MCF 10A (cell line): ENCODE measurements at regions of chr15 and their contacts with region 1.

Region 1: GRCh38 chr15:72375847-72376581 is at the start of gene HEXA:
- DNase-seq: peak; percentile 93
- H3K4me3 Mint-ChIP-seq: peak within 1 kb of the TSS; percentile 92
- H3K27ac Mint-ChIP-seq: peak within 1 kb of the TSS; percentile 95
- H3K4me1 Mint-ChIP-seq: peaks cover 18% of the 10 kb centered on the region
- H3K27me3 Mint-ChIP-seq: no peaks in the 10 kb centered on the region
- CTCF ChIP-seq: no peak
- total RNA-seq, gene HEXA: 87.5 and 110 TPM in 2 replicates

Region 2: DNA sequence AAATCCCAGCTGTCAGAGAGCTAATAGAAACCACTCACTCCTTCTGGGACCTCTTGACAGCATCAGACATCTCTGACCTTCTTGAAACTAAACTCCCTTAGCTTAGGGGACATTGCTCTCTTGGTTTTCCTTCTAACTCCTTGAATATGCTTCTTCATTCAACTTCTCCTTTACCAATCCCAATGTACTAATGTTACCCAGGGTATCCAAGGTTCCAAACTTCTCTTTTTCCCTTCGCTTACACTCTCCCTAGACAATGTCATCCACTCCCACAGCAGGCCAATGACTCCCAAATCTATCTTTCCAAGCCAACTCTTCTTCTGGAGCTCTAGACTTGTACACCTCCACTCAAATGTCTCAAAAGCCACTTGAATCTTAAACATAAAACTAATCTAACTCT is 14.8 kb before region 1 on chr15:
- CTCF ChIA-PET with region 1: no interaction called
- POLR2A ChIA-PET with region 1: interaction called, 21 read pairs
- intact Hi-C with region 1: no loop called
- DNase-seq: no peak
- H3K4me3 Mint-ChIP-seq: no peak overlapping the region
- H3K27ac Mint-ChIP-seq: no peak overlapping the region
- H3K4me1 Mint-ChIP-seq: peaks cover 11% of the 10 kb centered on the region
- H3K27me3 Mint-ChIP-seq: no peaks in the 10 kb centered on the region
- CTCF ChIP-seq: no peak

Region 3: GRCh38 chr15:72404841-72405240 is 28.8 kb after region 1 on chr15:
- CTCF ChIA-PET with region 1: no interaction called
- POLR2A ChIA-PET with region 1: interaction called, 13 read pairs
- intact Hi-C with region 1: no loop called
- DNase-seq: no peak
- H3K4me3 Mint-ChIP-seq: no peak overlapping the region
- H3K27ac Mint-ChIP-seq: no peak overlapping the region
- H3K4me1 Mint-ChIP-seq: peaks cover 6% of the 10 kb centered on the region
- H3K27me3 Mint-ChIP-seq: peaks cover 85% of the 10 kb centered on the region
- CTCF ChIP-seq: no peak

Region 4: GRCh38 chr15:72464251-72464650 is 88.2 kb after region 1 on chr15:
- CTCF ChIA-PET with region 1: interaction called, 3 read pairs
- POLR2A ChIA-PET with region 1: interaction called, 15 read pairs
- intact Hi-C with region 1: no loop called
- DNase-seq: no peak
- H3K4me3 Mint-ChIP-seq: no peak overlapping the region
- H3K27ac Mint-ChIP-seq: no peak overlapping the region
- H3K4me1 Mint-ChIP-seq: no peaks in the 10 kb centered on the region
- H3K27me3 Mint-ChIP-seq: no peaks in the 10 kb centered on the region
- CTCF ChIP-seq: no peak

Region 5: GRCh38 chr15:72473614-72474465 is 97.8 kb after region 1 on chr15 and contains the start of gene ARIH1:
- CTCF ChIA-PET with region 1: interaction called, 8 read pairs
- POLR2A ChIA-PET with region 1: interaction called, 27 read pairs
- intact Hi-C with region 1: loop called (anchors 1 kb)
- DNase-seq: peak; percentile 94
- H3K4me3 Mint-ChIP-seq: peak within 1 kb of the TSS; percentile 91
- H3K27ac Mint-ChIP-seq: peak within 1 kb of the TSS; percentile 100
- H3K4me1 Mint-ChIP-seq: peaks cover 6% of the 10 kb centered on the region
- H3K27me3 Mint-ChIP-seq: no peaks in the 10 kb centered on the region
- CTCF ChIP-seq: peak; percentile 32
- total RNA-seq, gene ARIH1: 234 and 235 TPM in 2 replicates